ENCODE measurements at regions of chr10 and their contacts with region 1.

Region 1: GRCh38 chr10:128011175-128011979 is 104.5 kb downstream of the PTPRE start:
- DNase-seq: peak; percentile 6
- H3K4me3 ChIP-seq: peak overlapping the region in 1 of 4 donors; percentile 36
- H3K27ac ChIP-seq: no peak overlapping the region
- H3K4me1 ChIP-seq: peaks cover 0 to 27% (median 4%) of the 10 kb centered on the region in 3 donors
- H3K27me3 ChIP-seq: peaks cover 0 to 50% (median 0%) of the 10 kb centered on the region in 4 donors
- CTCF ChIP-seq: peak; percentile 96 to 99 (median 98)
- POLR2A ChIP-seq: no peak

Region 2: GRCh38 chr10:127906548-127907377 is 104.6 kb before region 1 on chr10 and contains the start of gene PTPRE:
- intact Hi-C with region 1: loop called (anchors 5 kb)
- DNase-seq: no peak
- H3K4me3 ChIP-seq: peak within 1 kb of the TSS; percentile 36 to 74 (median 60)
- H3K27ac ChIP-seq: peak within 1 kb of the TSS; percentile 42 to 90 (median 76)
- H3K4me1 ChIP-seq: peaks cover 7 to 33% (median 14%) of the 10 kb centered on the region in 3 donors
- H3K27me3 ChIP-seq: peaks cover 0 to 44% (median 2%) of the 10 kb centered on the region in 4 donors
- CTCF ChIP-seq: peak; percentile 44 to 93 (median 85)
- POLR2A ChIP-seq: no peak
- total RNA-seq, gene PTPRE: 9.8 to 24.9 (median 22.7) TPM

Region 3: GRCh38 chr10:128209862-128210214 is 198.5 kb after region 1 on chr10:
- intact Hi-C with region 1: no loop called
- DNase-seq: no peak
- H3K4me3 ChIP-seq: peak overlapping the region in 3 of 4 donors; percentile 60 to 81 (median 80)
- H3K27ac ChIP-seq: no peak overlapping the region
- H3K4me1 ChIP-seq: peaks cover 0 to 25% (median 5%) of the 10 kb centered on the region in 3 donors
- H3K27me3 ChIP-seq: peaks cover 0 to 15% (median 0%) of the 10 kb centered on the region in 4 donors
- CTCF ChIP-seq: no peak
- POLR2A ChIP-seq: no peak